ENCODE measurements at regions of chr2 and their contacts with region 1.

Region 1: DNA sequence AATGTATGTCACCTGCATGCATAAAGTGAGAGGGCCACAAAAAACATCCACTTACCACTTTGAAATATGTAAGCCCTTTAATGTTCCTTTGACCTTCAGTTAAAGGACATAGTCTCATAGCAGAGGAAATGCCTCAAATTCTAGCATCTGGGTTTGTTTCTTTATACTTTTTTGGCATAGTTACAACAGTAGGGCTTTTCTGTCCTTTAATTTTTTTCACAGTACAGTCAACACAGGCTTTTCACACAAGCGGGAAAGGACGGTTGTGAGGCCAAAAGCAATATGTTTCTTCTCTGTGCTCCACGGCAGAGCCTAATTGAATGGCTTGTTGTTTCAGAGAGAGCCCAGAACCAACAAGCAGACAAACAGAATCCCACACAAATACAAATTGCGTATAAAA is 57.6 kb downstream of the CRIM1 start:
- DNase-seq: no peak
- H3K4me3 ChIP-seq: no peak overlapping the region
- H3K27ac ChIP-seq: no peak overlapping the region
- H3K4me1 ChIP-seq: peaks cover 12% of the 10 kb centered on the region; the same call in 1 of the 2 replicates
- H3K27me3 ChIP-seq: no peaks in the 10 kb centered on the region
- CTCF ChIP-seq: no peak

Region 2: GRCh38 chr2:36246320-36246990 is 166.8 kb before region 1 on chr2:
- CTCF ChIA-PET with region 1: no interaction called
- POLR2A ChIA-PET with region 1: no interaction called
- intact Hi-C with region 1: no loop called
- DNase-seq: no peak
- H3K4me3 ChIP-seq: no peak overlapping the region
- H3K27ac ChIP-seq: no peak overlapping the region
- H3K4me1 ChIP-seq: no peaks in the 10 kb centered on the region
- H3K27me3 ChIP-seq: no peaks in the 10 kb centered on the region
- CTCF ChIP-seq: no peak

Region 3: GRCh38 chr2:36367895-36368353 is 45.3 kb before region 1 on chr2:
- CTCF ChIA-PET with region 1: interaction called, 17 read pairs
- POLR2A ChIA-PET with region 1: interaction called, 15 read pairs
- intact Hi-C with region 1: no loop called
- DNase-seq: peak; percentile 29 to 76
- H3K4me3 ChIP-seq: peak overlapping the region; percentile 14; the same call in 1 of the 2 replicates
- H3K27ac ChIP-seq: peak overlapping the region; percentile 52
- H3K4me1 ChIP-seq: peaks cover 73% of the 10 kb centered on the region
- H3K27me3 ChIP-seq: no peaks in the 10 kb centered on the region
- CTCF ChIP-seq: no peak

Region 4: DNA sequence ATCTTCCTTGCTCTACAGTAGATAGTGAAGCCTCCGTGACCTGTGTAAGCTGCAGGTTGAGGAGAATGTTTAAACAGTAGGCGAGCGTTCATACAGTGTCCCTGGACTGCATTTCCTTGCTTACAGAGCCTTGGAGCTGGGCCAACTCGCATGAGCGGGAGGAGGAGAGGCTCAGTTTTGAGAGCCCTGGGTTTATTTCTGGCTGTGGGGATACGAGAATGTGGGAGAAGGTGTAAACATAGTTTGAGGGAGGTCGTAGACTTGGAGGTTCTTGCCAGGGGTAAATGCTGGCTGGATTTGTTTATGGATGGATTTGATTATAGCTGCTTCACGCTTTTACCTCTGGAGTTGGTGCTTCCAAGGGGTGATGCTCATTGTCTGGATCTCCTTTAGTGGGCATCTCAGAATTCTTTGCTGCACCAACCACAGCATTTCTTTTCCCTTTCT is 36.9 kb before region 1 on chr2:
- CTCF ChIA-PET with region 1: interaction called, 6 read pairs
- POLR2A ChIA-PET with region 1: interaction called, 7 read pairs
- intact Hi-C with region 1: loop called (anchors 2 kb)
- DNase-seq: peak; percentile 29 to 37
- H3K4me3 ChIP-seq: no peak overlapping the region
- H3K27ac ChIP-seq: peak overlapping the region; percentile 88
- H3K4me1 ChIP-seq: peaks cover 98% of the 10 kb centered on the region
- H3K27me3 ChIP-seq: no peaks in the 10 kb centered on the region
- CTCF ChIP-seq: no peak

Region 5: GRCh38 chr2:36449943-36450392 is 36.8 kb after region 1 on chr2:
- CTCF ChIA-PET with region 1: no interaction called
- POLR2A ChIA-PET with region 1: no interaction called
- intact Hi-C with region 1: loop called (anchors 5 kb)
- DNase-seq: no peak
- H3K4me3 ChIP-seq: no peak overlapping the region
- H3K27ac ChIP-seq: no peak overlapping the region
- H3K4me1 ChIP-seq: 0 out of 2 replicates have a peak, but pooled peaks cover 3% of the 10 kb centered on the region
- H3K27me3 ChIP-seq: no peaks in the 10 kb centered on the region
- CTCF ChIP-seq: no peak

Region 6: GRCh38 chr2:36486546-36487044 is 73.4 kb after region 1 on chr2:
- CTCF ChIA-PET with region 1: no interaction called
- POLR2A ChIA-PET with region 1: interaction called, 6 read pairs
- intact Hi-C with region 1: loop called (anchors 1 kb)
- DNase-seq: peak; percentile 15 to 89
- H3K4me3 ChIP-seq: no peak overlapping the region
- H3K27ac ChIP-seq: peak overlapping the region; percentile 42
- H3K4me1 ChIP-seq: peaks cover 72% of the 10 kb centered on the region
- H3K27me3 ChIP-seq: no peaks in the 10 kb centered on the region
- CTCF ChIP-seq: no peak